AG04449 (cell line): ENCODE measurements at regions of chr5 and their contacts with region 1.

Region 1: GRCh38 chr5:150036513-150036912 is 36.0 kb downstream of the HMGXB3 start:
- DNase-seq: peak; percentile 95
- H3K4me3 ChIP-seq: no peak overlapping the region
- CTCF ChIP-seq: no peak

Region 2: GRCh38 chr5:150082374-150082773 is 45.9 kb after region 1 on chr5:
- CTCF ChIA-PET with region 1: no interaction called
- POLR2A ChIA-PET with region 1: no interaction called
- DNase-seq: no peak
- H3K4me3 ChIP-seq: no peak overlapping the region
- CTCF ChIP-seq: no peak

Region 3: GRCh38 chr5:150112261-150113046 is 75.9 kb after region 1 on chr5:
- CTCF ChIA-PET with region 1: no interaction called
- POLR2A ChIA-PET with region 1: interaction called, 15 read pairs
- DNase-seq: peak; percentile 56
- H3K4me3 ChIP-seq: no peak overlapping the region
- CTCF ChIP-seq: no peak

Region 4: GRCh38 chr5:150144246-150144801 is 107.8 kb after region 1 on chr5:
- CTCF ChIA-PET with region 1: no interaction called
- POLR2A ChIA-PET with region 1: no interaction called
- DNase-seq: no peak
- H3K4me3 ChIP-seq: peak overlapping the region; percentile 23
- CTCF ChIP-seq: no peak